ENCODE measurements at regions of chr12 and their contacts with region 1.

Region 1: GRCh38 chr12:92928962-92929915 is at the start of gene EEA1:
- DNase-seq: peak; percentile 96
- H3K4me3 Mint-ChIP-seq: peak within 1 kb of the TSS; percentile 80
- H3K27ac Mint-ChIP-seq: peak within 1 kb of the TSS; percentile 78
- H3K4me1 Mint-ChIP-seq: peaks cover 28% of the 10 kb centered on the region
- H3K27me3 Mint-ChIP-seq: peaks cover 16% of the 10 kb centered on the region
- total RNA-seq, gene EEA1: 12.6 to 16.1 TPM

Region 2: DNA sequence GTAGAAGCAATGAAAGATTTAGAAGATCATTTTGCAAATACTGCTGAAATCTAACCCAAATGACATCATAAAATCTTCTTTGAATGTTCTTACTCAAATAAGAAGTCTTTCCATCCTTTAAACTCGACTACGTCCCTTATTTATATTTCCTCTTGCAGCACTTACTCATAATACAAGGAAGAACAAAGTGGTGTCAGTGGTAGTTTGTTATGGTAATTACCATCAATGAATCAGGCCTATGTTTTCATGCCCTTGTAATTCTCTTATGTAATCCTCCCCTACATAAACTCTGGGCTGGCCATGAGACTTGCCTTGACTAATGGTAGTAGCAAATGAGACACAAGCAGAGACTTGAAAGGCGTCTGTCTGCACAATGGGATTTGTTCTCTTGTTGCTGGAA is 17.2 kb before region 1 on chr12:
- CTCF ChIA-PET with region 1: no interaction called
- POLR2A ChIA-PET with region 1: interaction called, 46 read pairs
- DNase-seq: no peak
- H3K4me3 Mint-ChIP-seq: no peak overlapping the region
- H3K27ac Mint-ChIP-seq: peak overlapping the region; percentile 1
- H3K4me1 Mint-ChIP-seq: peaks cover 34% of the 10 kb centered on the region
- H3K27me3 Mint-ChIP-seq: no peaks in the 10 kb centered on the region

Region 3: GRCh38 chr12:93378373-93379325 is 449.4 kb after region 1 on chr12:
- CTCF ChIA-PET with region 1: interaction called, 4 read pairs
- POLR2A ChIA-PET with region 1: interaction called, 10 read pairs
- DNase-seq: peak; percentile 68
- H3K4me3 Mint-ChIP-seq: peak overlapping the region; percentile 100
- H3K27ac Mint-ChIP-seq: peak overlapping the region; percentile 100
- H3K4me1 Mint-ChIP-seq: peaks cover 34% of the 10 kb centered on the region
- H3K27me3 Mint-ChIP-seq: peaks cover 2% of the 10 kb centered on the region

Measured in activated CD4-positive, alpha-beta memory T cell treated with anti-CD3 and anti-CD28 coated beads, Interleukin-2, amount 10 ng/mL, durations not matched to agents 7 days and 5 days (primary cell).